ENCODE measurements at regions of chr2 and their contacts with region 1.

Region 1: DNA sequence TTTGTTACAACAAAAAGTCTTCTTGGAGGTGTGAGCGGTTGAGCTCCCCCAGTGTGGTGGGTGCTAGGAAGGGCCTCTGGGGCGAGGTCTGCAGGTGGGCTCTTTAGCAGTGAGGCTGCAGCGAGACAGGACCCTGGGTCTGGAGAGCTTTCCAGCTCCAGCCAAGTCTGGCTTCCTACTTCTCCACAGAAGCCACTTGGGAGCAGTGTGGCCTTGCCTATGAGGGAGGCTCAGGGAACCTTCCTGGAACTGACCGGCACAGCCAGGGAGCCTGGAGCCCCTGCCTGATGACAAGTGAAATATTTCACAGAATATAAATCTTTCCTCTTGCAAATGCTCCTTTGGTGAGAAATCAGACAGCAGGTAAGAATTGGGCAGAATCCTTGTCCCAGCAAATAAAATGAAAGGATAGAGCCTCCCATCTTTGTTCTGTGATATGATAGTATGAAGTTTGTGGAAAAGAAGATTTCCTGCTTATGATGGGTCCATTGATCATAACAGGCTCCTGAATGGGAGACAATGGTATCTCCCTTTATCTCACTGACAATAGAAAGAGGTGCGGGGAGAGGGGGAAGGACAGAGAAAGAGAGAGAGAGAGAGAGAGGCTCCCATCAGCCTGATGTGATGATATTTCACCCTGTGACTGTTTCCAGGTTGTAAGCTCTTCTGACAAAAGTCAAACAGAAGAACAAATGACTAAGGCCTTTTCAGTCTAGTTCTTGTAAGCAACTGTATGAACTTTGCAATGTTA is 289.8 kb upstream of the SPRED2 start:
- DNase-seq: peak; percentile 11 to 24
- ATAC-seq: peak; percentile 58 to 64
- H3K4me3 ChIP-seq: no peak overlapping the region
- H3K27ac ChIP-seq: no peak overlapping the region
- H3K4me1 ChIP-seq: no peaks in the 10 kb centered on the region
- H3K27me3 ChIP-seq: no peaks in the 10 kb centered on the region
- CTCF ChIP-seq: peak in 3 of 5 experiments; percentile 15 to 33 (median 25)
- POLR2A ChIP-seq: no peak

Region 2: GRCh38 chr2:65464604-65465003 is 257.6 kb before region 1 on chr2:
- in situ Hi-C with region 1: no loop called
- intact Hi-C with region 1: no loop called
- DNase-seq: no peak
- ATAC-seq: peak; percentile 30 to 56
- H3K4me3 ChIP-seq: no peak overlapping the region
- H3K27ac ChIP-seq: no peak overlapping the region
- H3K4me1 ChIP-seq: peaks cover 0 to 10% of the 10 kb centered on the region in 2 donors
- H3K27me3 ChIP-seq: no peaks in the 10 kb centered on the region
- CTCF ChIP-seq: no peak
- POLR2A ChIP-seq: no peak

Region 3: DNA sequence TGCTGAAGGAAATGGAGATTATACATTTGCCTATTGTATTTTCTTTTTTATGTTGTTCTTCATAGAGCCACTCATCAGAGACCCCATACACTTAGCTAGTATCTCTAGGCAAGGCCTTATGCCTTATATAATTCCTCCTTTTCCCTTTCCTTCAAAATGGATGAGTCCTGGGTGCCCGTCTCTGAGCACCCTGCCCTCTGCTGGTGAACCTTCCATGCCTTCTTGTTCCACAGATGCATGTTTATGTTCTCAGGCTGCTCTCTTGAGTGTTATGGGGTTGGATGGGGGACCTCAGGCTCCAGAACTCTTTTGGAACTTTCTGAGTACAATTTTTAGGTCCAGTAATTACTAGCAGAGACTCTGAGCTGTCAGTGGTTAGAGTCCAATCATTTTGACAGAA is 78.8 kb after region 1 on chr2:
- in situ Hi-C with region 1: no loop called
- intact Hi-C with region 1: loop called (anchors 5 kb)
- DNase-seq: no peak
- ATAC-seq: no peak
- H3K4me3 ChIP-seq: no peak overlapping the region
- H3K27ac ChIP-seq: no peak overlapping the region
- H3K4me1 ChIP-seq: no peaks in the 10 kb centered on the region
- H3K27me3 ChIP-seq: no peaks in the 10 kb centered on the region
- CTCF ChIP-seq: peak in 4 of 5 experiments; percentile 21 to 48 (median 30)
- POLR2A ChIP-seq: no peak